ENCODE measurements at regions of chr22 and their contacts with region 1.

Region 1: GRCh38 chr22:45615364-45615763 is 56.3 kb upstream of the ATXN10 start:
- DNase-seq: no peak
- H3K4me3 ChIP-seq: no peak overlapping the region
- H3K4me1 ChIP-seq: no peaks in the 10 kb centered on the region
- H3K27me3 ChIP-seq: no peaks in the 10 kb centered on the region

Region 2: GRCh38 chr22:45911601-45912271 is 296.4 kb after region 1 on chr22:
- in situ Hi-C with region 1: no loop called
- DNase-seq: no peak
- H3K4me3 ChIP-seq: no peak overlapping the region
- H3K4me1 ChIP-seq: no peaks in the 10 kb centered on the region
- H3K27me3 ChIP-seq: no peaks in the 10 kb centered on the region

Region 3: DNA sequence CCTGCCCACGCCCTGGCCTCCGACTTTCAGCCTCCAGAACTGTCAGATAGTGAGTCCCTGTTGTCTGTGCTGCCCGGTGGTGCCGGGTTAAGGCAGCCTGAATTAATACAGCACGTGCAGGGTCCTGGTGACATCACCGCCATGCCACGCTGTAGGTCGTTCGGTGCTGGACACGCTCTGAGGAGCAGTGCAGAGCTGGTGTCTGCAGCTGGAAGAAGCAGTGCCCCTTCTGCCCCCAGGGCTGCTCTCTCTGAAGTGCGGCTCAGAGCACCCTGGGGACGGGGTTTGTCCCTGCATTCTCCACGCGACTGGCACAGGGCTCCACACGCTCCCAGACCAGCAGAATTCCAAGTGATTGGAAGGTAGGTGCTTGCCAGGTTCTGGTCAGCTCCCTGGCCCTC is 1978.5 kb after region 1 on chr22:
- in situ Hi-C with region 1: loop called (anchors 5 kb)
- DNase-seq: no peak
- H3K4me3 ChIP-seq: no peak overlapping the region
- H3K4me1 ChIP-seq: no peaks in the 10 kb centered on the region
- H3K27me3 ChIP-seq: no peaks in the 10 kb centered on the region